Panc1 (cell line): ENCODE measurements at regions of chr3 and their contacts with region 1.

Region 1: GRCh38 chr3:198067416-198067815 is 107.4 kb downstream of the LMLN start:
- DNase-seq: no peak
- ATAC-seq: no peak
- H3K4me3 ChIP-seq: no peak overlapping the region
- H3K27ac ChIP-seq: no peak overlapping the region
- H3K4me1 ChIP-seq: peaks cover 9% of the 10 kb centered on the region
- H3K27me3 ChIP-seq: no peaks in the 10 kb centered on the region
- CTCF ChIP-seq: no peak

Region 2: DNA sequence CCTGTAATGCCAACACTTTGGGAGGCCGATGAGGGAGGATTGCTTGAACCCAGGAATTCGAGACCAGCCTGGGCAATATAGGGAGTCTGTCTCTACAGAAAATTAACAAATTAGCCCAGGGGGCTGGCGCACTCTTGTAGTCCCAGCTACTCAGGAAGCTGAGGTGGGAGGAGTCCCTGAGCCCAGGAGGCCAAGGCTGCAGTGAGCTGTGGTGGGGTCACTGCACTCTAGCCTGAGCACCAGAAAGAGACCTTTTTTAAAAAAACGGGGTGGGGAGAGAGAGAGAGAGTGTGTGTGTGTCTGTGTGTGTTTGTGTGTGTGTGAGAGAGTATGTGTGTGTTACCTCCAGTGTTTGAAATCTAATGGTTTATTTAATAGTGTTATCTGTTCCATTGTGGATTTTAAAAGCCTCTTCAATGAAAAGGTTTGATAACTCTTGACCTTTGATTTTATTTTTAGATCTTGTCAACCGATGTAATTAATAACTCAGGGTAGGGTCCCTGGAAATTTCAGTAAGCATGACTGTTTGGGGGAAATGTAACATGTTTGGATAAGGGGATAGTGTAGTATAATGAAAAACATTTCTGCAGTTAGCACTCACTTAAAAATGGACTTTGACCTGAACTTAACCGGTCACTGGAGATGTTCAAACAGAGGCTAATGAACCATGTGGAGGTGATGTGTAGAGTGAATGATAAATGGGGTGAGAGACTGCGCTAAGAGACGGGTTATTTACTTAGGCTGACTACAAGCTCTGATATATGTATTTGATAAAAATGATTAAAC is 246.7 kb before region 1 on chr3:
- CTCF ChIA-PET with region 1: no interaction called
- POLR2A ChIA-PET with region 1: interaction called, 17 read pairs
- in situ Hi-C with region 1: no loop called
- intact Hi-C with region 1: no loop called
- DNase-seq: no peak
- ATAC-seq: no peak
- H3K4me3 ChIP-seq: no peak overlapping the region
- H3K27ac ChIP-seq: no peak overlapping the region
- H3K4me1 ChIP-seq: no peaks in the 10 kb centered on the region; the same call in 1 of the 2 replicates
- H3K27me3 ChIP-seq: no peaks in the 10 kb centered on the region
- CTCF ChIP-seq: no peak

Region 3: GRCh38 chr3:198017100-198017499 is 50.3 kb before region 1 on chr3:
- CTCF ChIA-PET with region 1: no interaction called
- POLR2A ChIA-PET with region 1: no interaction called
- in situ Hi-C with region 1: no loop called
- intact Hi-C with region 1: no loop called
- DNase-seq: no peak
- ATAC-seq: no peak
- H3K4me3 ChIP-seq: no peak overlapping the region
- H3K27ac ChIP-seq: no peak overlapping the region
- H3K4me1 ChIP-seq: no peaks in the 10 kb centered on the region
- H3K27me3 ChIP-seq: no peaks in the 10 kb centered on the region
- CTCF ChIP-seq: no peak